Dorsolateral prefrontal cortex (tissue), 120 donors: ENCODE measurements at regions of chr9 and their contacts with region 1.

Region 1: DNA sequence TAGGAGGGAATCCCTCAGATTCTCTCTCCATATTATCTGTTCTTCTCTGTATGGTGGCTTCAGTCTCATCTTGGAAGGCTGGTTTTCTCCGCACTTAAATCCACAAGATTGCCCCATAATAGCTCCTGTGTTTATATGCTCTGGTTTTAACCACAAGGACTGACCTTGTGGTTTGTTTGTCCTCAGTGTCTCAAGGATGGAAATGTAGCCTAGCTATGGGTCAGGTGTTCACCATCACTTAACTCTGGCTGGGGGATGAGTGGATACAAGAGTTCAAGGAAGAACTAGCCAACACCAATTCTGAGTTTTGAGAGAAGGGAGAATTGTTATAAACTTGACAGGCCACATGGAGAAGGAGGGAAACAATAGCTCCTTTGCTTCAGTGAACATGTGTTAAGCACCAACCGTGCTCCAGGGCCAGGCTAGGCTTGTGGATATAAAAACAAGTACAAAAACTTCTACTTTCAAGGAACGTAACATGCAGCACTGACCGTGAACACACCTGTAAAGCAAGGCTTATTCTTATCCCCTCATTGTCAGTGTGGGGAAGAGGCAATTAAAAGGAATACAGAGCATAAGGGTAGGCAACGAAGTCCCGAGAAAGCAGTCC is 75.6 kb upstream of the VLDLR start:
- DNase-seq: no peak
- H3K4me3 ChIP-seq: no peak overlapping the region
- H3K27ac ChIP-seq: no peak overlapping the region
- H3K27me3 ChIP-seq: no peaks in the 10 kb centered on the region
- CTCF ChIP-seq: no peak

Region 2: DNA sequence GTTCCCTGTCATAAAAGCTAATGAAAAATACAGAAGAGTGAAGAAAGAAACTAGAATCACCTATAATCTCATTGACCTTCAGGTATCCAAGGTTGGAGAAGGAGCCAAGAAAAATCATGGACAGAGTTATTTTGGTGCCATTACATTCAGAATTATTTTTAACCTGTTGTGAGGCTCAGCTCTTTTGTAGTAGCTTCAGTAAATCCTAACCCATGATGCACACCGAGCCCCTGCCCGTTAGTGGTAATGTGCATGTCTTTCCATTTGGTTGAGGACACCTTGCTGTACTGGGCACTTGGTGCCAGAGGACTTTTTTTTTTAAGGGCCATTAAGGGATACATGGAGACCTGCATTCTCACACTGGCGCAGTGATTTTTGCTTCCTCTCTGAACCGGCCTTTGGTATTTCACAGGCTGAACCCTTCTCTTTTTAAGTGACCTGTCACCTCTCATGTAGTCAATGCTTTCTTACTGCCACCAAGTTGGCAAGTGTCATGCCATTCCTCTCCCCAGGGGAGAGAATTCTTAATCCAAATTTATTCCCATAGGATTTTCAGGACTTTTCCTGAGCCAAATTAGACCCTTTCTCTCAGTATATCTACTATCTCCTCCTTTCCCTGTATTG is 405.3 kb before region 1 on chr9:
- intact Hi-C with region 1: loop called in 1 of 2 experiments (anchors 5 kb)
- DNase-seq: no peak
- H3K4me3 ChIP-seq: no peak overlapping the region
- H3K27ac ChIP-seq: no peak overlapping the region
- H3K27me3 ChIP-seq: no peaks in the 10 kb centered on the region
- CTCF ChIP-seq: no peak

Region 3: GRCh38 chr9:2610985-2611384 is 65.0 kb after region 1 on chr9:
- intact Hi-C with region 1: loop called in 1 of 2 experiments (anchors 2 kb)
- DNase-seq: no peak
- H3K4me3 ChIP-seq: no peak overlapping the region
- H3K27ac ChIP-seq: no peak overlapping the region
- H3K27me3 ChIP-seq: no peaks in the 10 kb centered on the region
- CTCF ChIP-seq: no peak